PC-9 (cell line): ENCODE measurements at regions of chr3 and their contacts with region 1.

Region 1: GRCh38 chr3:107643038-107643883 is 120.5 kb downstream of the BBX start:
- DNase-seq: no peak
- H3K4me3 ChIP-seq: no peak overlapping the region
- H3K27ac ChIP-seq: no peak overlapping the region
- H3K4me1 ChIP-seq: peaks cover 10% of the 10 kb centered on the region
- H3K27me3 ChIP-seq: no peaks in the 10 kb centered on the region
- CTCF ChIP-seq: no peak; the same call in 1 of the 2 replicates

Region 2: DNA sequence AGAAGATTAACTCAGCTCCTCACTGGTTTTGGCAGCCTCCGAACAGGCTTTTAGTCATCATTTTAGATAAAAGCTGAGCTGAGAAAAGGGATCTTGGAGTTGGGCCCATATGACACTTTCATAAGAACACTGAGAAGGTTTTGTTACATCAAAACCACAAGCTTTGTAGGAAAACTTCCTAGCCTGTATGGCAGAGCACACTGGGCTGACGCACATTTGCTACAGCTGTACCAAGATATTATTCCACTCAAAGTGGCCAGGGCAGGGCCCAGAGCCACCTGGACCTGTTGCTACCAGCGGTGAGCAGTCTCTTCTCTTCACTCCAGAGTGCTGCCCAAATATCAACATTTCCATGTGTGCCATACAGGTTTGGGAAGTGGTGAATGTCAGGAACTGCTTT is 426.6 kb before region 1 on chr3:
- CTCF ChIA-PET with region 1: no interaction called
- POLR2A ChIA-PET with region 1: interaction called, 10 read pairs
- intact Hi-C with region 1: no loop called
- DNase-seq: peak in 1 of 2 experiments; percentile 57
- H3K4me3 ChIP-seq: peak overlapping the region; percentile 6; the same call in 1 of the 2 replicates
- H3K27ac ChIP-seq: peak overlapping the region; percentile 87
- H3K4me1 ChIP-seq: peaks cover 46% of the 10 kb centered on the region
- H3K27me3 ChIP-seq: no peaks in the 10 kb centered on the region
- CTCF ChIP-seq: 0 out of 2 replicates have a peak, but pooled peaks have one; percentile 18

Region 3: GRCh38 chr3:107690522-107691138 is 47.4 kb after region 1 on chr3:
- CTCF ChIA-PET with region 1: no interaction called
- POLR2A ChIA-PET with region 1: interaction called, 18 read pairs
- intact Hi-C with region 1: no loop called
- DNase-seq: peak in 1 of 2 experiments; percentile 66
- H3K4me3 ChIP-seq: no peak overlapping the region
- H3K27ac ChIP-seq: no peak overlapping the region
- H3K4me1 ChIP-seq: no peaks in the 10 kb centered on the region
- H3K27me3 ChIP-seq: no peaks in the 10 kb centered on the region
- CTCF ChIP-seq: peak; percentile 87

Region 4: GRCh38 chr3:107701299-107701698 is 58.0 kb after region 1 on chr3:
- CTCF ChIA-PET with region 1: no interaction called
- POLR2A ChIA-PET with region 1: no interaction called
- intact Hi-C with region 1: no loop called
- DNase-seq: no peak
- H3K4me3 ChIP-seq: no peak overlapping the region
- H3K27ac ChIP-seq: no peak overlapping the region
- H3K4me1 ChIP-seq: no peaks in the 10 kb centered on the region
- H3K27me3 ChIP-seq: no peaks in the 10 kb centered on the region
- CTCF ChIP-seq: no peak

Region 5: GRCh38 chr3:107775974-107776373 is 132.7 kb after region 1 on chr3:
- CTCF ChIA-PET with region 1: no interaction called
- POLR2A ChIA-PET with region 1: no interaction called
- intact Hi-C with region 1: no loop called
- DNase-seq: no peak
- H3K4me3 ChIP-seq: no peak overlapping the region
- H3K27ac ChIP-seq: no peak overlapping the region
- H3K4me1 ChIP-seq: no peaks in the 10 kb centered on the region
- H3K27me3 ChIP-seq: no peaks in the 10 kb centered on the region
- CTCF ChIP-seq: no peak

Region 6: DNA sequence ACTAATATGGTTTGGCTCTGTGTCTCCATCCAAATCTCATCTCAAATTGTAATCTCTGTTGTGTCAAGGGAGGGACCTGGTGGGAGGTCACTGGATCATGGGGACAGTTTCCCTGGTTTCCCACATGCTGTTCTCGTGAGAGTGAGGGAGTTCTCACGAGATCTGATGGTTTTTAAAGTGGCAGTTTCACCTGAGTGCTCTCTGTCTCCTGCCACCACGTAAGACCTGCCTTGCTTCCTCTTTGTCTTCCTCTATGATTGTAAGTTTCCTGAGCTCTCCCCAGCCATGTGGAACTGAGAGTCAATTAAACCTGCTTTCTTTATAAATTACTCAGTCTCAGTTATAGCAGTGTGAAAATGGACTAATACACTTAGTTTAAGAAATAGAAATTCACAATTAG is 218.6 kb after region 1 on chr3:
- CTCF ChIA-PET with region 1: no interaction called
- POLR2A ChIA-PET with region 1: no interaction called
- intact Hi-C with region 1: no loop called
- DNase-seq: no peak
- H3K4me3 ChIP-seq: no peak overlapping the region
- H3K27ac ChIP-seq: no peak overlapping the region
- H3K4me1 ChIP-seq: no peaks in the 10 kb centered on the region
- H3K27me3 ChIP-seq: no peaks in the 10 kb centered on the region
- CTCF ChIP-seq: no peak